Motor neuron (in vitro differentiated cells): ENCODE measurements at regions of chr7 and their contacts with region 1.

Region 1: DNA sequence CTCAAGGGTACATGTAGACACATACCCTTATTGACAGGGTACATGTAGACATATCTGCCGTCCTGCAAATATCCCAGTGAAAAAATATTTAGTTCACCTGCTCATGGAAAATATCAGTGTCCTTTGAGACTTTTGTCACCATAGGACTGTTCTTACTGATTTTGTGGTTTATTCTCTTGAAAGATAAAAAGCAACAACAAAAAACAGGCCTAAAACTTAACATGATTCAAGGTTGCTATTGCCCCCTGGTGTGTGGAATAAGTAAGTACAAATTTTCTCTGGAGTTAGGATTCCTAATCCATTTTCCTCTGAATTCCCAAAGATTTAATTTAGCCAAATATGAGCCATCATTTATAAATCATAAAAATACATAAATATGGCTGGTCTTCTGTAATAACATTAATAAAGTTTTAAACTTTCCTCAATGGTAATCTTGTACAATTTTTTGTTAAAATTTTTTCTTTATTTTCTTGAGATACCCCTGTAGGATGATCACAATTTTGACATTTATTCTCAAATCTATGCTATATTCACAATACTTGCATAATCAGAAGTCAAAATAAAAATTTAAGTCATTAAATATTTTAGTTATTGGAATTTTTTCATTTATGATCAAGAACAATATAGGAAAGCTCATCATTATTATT is 741.4 kb upstream of the POT1 start:
- ATAC-seq: no peak
- H3K4me3 ChIP-seq: no peak overlapping the region
- H3K27ac ChIP-seq: no peak overlapping the region
- H3K4me1 ChIP-seq: no peaks in the 10 kb centered on the region

Region 2: DNA sequence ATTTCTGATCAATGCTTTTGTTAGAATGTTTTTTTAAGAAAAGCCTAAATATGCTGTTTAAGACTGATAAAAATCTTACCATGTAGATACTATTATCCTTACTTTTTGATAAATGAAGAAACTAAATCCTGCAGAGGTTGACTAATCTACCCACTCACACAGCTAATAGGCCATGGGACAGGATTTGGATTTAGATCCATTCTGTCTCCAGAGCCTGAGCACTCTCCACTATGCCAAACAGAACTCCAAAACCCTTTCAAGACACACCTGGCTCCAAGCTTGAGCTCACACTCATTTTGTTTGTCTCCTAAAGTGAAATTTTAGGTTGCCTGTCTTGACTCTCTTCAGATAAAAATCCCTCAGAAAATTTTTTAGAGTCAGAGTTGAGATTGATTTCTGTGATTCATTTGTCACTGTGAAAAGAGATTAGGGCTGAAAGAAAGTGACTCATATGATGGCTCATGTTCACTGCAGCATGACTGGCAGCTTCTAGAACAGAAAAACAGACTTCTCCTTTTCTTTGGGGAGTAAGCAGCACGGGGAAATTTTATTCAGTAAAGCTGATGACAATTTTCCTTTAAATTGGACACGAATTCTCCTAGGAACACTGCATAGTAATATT is 609.2 kb before region 1 on chr7:
- in situ Hi-C with region 1: loop called in 3 of 9 experiments (anchors 25 kb)
- ATAC-seq: peak in 7 of 8 experiments; percentile 48 to 91 (median 60)
- H3K4me3 ChIP-seq: no peak overlapping the region
- H3K27ac ChIP-seq: no peak overlapping the region
- H3K4me1 ChIP-seq: no peaks in the 10 kb centered on the region

Region 3: DNA sequence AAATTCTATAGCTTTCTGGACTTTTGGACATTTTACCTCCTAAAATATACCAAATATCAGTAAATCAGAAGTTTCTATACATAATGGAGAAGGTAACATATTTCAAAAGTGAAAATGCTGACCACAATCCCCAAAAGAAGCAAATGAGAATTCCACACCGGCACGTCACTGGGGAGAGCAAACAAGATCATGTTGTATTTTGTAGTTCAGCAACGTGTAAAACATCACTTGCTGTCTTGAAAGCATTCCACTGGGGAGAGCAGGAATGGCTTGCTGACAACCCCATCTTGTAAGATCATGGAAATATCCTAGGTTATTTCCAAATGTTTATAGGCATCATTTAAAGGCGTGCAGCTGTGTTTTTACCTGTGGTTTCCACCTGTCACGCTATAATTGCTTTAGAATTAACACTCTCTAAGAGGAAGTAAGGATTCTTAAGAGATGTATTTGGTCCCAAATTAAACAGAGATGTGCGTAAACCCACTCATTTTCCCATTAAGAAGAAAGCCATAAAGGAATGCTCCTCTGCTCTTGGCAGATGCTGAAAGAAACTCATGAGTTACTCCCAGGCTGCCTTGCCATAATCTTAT is 344.3 kb before region 1 on chr7:
- in situ Hi-C with region 1: no loop called
- ATAC-seq: no peak
- H3K4me3 ChIP-seq: no peak overlapping the region
- H3K27ac ChIP-seq: no peak overlapping the region
- H3K4me1 ChIP-seq: no peaks in the 10 kb centered on the region